Vagina (tissue), 2 donors: ENCODE measurements at regions of chr4 and their contacts with region 1.

Region 1: DNA sequence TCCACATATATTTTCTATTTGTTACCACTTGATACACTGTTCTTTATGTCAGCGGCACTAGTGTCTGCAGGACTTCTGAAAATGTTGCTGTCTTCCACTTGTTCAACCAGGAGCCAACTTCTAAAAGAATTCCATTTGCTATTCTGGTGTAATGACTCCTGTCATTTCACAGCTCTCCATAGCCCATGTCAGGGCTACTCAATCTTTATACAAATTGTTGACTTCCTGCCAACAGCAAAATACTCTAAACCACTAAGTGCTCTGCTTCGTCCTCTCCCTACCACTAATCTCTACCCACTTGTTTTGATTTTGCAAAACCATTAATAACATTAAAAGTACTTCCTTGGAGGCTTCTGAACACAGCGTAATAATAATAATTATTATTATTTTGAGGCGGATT is 7.2 kb downstream of the CTSO start:
- DNase-seq: no peak
- H3K4me3 ChIP-seq: no peak overlapping the region
- H3K27ac ChIP-seq: no peak overlapping the region
- H3K4me1 ChIP-seq: no peaks in the 10 kb centered on the region
- H3K27me3 ChIP-seq: no peaks in the 10 kb centered on the region
- CTCF ChIP-seq: no peak
- POLR2A ChIP-seq: no peak

Region 2: DNA sequence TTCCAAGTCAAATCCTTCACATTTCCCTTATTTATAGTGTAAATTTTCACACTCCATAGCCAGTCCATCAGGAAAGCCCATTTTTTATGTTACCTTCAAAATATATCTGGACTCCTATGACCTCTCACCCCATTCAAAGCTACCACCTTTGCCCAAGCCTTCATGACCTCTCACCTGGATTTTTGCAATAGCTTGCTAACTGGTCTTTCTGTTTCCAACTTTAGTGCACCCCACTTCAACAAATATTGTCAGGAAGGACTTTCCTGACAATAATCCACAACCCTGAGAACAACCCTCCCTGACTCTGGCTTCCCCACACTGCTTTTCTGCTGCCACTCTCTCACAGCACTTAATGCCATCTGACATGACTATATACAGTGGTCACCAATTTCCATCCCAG is 113.8 kb before region 1 on chr4:
- intact Hi-C with region 1: loop called (anchors 5 kb)
- DNase-seq: no peak
- H3K4me3 ChIP-seq: no peak overlapping the region
- H3K27ac ChIP-seq: no peak overlapping the region
- H3K4me1 ChIP-seq: no peaks in the 10 kb centered on the region
- H3K27me3 ChIP-seq: no peaks in the 10 kb centered on the region
- CTCF ChIP-seq: no peak
- POLR2A ChIP-seq: no peak